Activated CD8-positive, alpha-beta T cell treated with anti-CD3 and anti-CD28 coated beads for 36 hours (primary cell): ENCODE measurements at regions of chr5 and their contacts with region 1.

Region 1: GRCh38 chr5:139113892-139114291 is 84.3 kb downstream of the SIL1 start:
- DNase-seq: no peak
- ATAC-seq: no peak
- H3K4me3 Mint-ChIP-seq: no peak overlapping the region
- H3K27ac Mint-ChIP-seq: no peak overlapping the region
- H3K4me1 Mint-ChIP-seq: no peaks in the 10 kb centered on the region
- H3K27me3 Mint-ChIP-seq: no peaks in the 10 kb centered on the region
- CTCF ChIP-seq: no peak

Region 2: GRCh38 chr5:139100825-139101224 is 13.1 kb before region 1 on chr5:
- CTCF ChIA-PET with region 1: no interaction called
- POLR2A ChIA-PET with region 1: no interaction called
- intact Hi-C with region 1: no loop called
- DNase-seq: no peak
- ATAC-seq: no peak
- H3K4me3 Mint-ChIP-seq: no peak overlapping the region
- H3K27ac Mint-ChIP-seq: no peak overlapping the region
- H3K4me1 Mint-ChIP-seq: no peaks in the 10 kb centered on the region
- H3K27me3 Mint-ChIP-seq: no peaks in the 10 kb centered on the region
- CTCF ChIP-seq: no peak

Region 3: GRCh38 chr5:139131465-139131864 is 17.6 kb after region 1 on chr5:
- CTCF ChIA-PET with region 1: no interaction called
- POLR2A ChIA-PET with region 1: no interaction called
- intact Hi-C with region 1: loop called (anchors 1 kb)
- DNase-seq: no peak
- ATAC-seq: no peak
- H3K4me3 Mint-ChIP-seq: no peak overlapping the region
- H3K27ac Mint-ChIP-seq: no peak overlapping the region
- H3K4me1 Mint-ChIP-seq: no peaks in the 10 kb centered on the region
- H3K27me3 Mint-ChIP-seq: no peaks in the 10 kb centered on the region
- CTCF ChIP-seq: no peak

Region 4: DNA sequence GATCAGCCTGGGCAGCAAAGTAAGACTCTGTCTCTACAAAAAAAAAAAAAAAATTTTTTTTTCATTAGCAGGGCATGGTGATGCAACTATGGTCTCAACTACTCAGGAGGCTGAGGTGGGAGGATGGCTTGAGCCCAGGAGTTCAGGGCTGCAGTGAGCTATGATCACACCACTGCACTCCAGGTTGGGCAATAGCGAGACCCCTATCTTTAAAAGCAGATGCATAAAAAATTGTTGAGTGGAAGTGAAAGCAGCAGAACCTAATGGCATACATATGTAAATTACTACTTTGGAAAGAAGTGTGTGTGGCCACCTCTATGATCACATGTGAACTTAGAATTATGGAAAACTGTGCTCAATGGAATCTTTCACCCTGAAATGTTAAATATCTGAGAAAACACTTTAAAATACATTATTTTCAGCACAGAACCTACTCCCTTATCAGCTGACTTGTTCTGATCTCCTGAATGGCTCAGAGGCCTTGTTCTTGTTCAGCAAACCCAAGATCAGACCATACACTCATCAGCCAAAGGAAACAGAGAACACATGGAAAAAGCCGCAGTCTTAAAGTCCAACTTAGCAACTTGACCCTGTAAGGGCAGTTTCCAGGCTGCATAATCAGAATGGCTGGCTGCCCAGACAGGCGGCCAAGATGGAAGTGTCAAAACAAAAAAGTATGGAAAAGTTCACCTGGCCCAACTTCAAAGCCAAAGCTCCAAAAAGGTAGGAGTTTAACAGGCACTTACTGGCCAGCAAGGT is 27.7 kb after region 1 on chr5:
- CTCF ChIA-PET with region 1: no interaction called
- POLR2A ChIA-PET with region 1: no interaction called
- intact Hi-C with region 1: no loop called
- DNase-seq: no peak
- ATAC-seq: no peak
- H3K4me3 Mint-ChIP-seq: no peak overlapping the region
- H3K27ac Mint-ChIP-seq: no peak overlapping the region
- H3K4me1 Mint-ChIP-seq: peaks cover 35% of the 10 kb centered on the region
- H3K27me3 Mint-ChIP-seq: no peaks in the 10 kb centered on the region
- CTCF ChIP-seq: no peak